ENCODE measurements at regions of chr21 and their contacts with region 1.

Region 1: GRCh38 chr21:18499761-18500376 is 96.3 kb upstream of the TMPRSS15 start:
- DNase-seq: peak; percentile 21
- ATAC-seq: no peak
- H3K4me3 ChIP-seq: no peak overlapping the region
- H3K27ac ChIP-seq: no peak overlapping the region
- H3K4me1 ChIP-seq: no peaks in the 10 kb centered on the region
- H3K27me3 ChIP-seq: no peaks in the 10 kb centered on the region
- CTCF ChIP-seq: peak; percentile 50
- EP300 ChIP-seq: no peak
- POLR2A ChIP-seq: no peak
- RAD21 ChIP-seq: no peak

Region 2: GRCh38 chr21:18417141-18417790 is 82.6 kb before region 1 on chr21:
- CTCF ChIA-PET with region 1: no interaction called
- POLR2A ChIA-PET with region 1: no interaction called
- in situ Hi-C with region 1: no loop called
- intact Hi-C with region 1: no loop called
- DNase-seq: no peak
- ATAC-seq: no peak
- H3K4me3 ChIP-seq: no peak overlapping the region
- H3K27ac ChIP-seq: no peak overlapping the region
- H3K4me1 ChIP-seq: no peaks in the 10 kb centered on the region
- H3K27me3 ChIP-seq: no peaks in the 10 kb centered on the region
- CTCF ChIP-seq: no peak
- EP300 ChIP-seq: no peak
- POLR2A ChIP-seq: no peak
- RAD21 ChIP-seq: no peak

Region 3: GRCh38 chr21:18430341-18430740 is 69.5 kb before region 1 on chr21:
- CTCF ChIA-PET with region 1: no interaction called
- POLR2A ChIA-PET with region 1: no interaction called
- in situ Hi-C with region 1: no loop called
- intact Hi-C with region 1: loop called (anchors 2 kb)
- DNase-seq: no peak
- ATAC-seq: no peak
- H3K4me3 ChIP-seq: no peak overlapping the region
- H3K27ac ChIP-seq: no peak overlapping the region
- H3K4me1 ChIP-seq: no peaks in the 10 kb centered on the region
- H3K27me3 ChIP-seq: no peaks in the 10 kb centered on the region
- CTCF ChIP-seq: no peak
- EP300 ChIP-seq: no peak
- POLR2A ChIP-seq: no peak
- RAD21 ChIP-seq: no peak

Region 4: DNA sequence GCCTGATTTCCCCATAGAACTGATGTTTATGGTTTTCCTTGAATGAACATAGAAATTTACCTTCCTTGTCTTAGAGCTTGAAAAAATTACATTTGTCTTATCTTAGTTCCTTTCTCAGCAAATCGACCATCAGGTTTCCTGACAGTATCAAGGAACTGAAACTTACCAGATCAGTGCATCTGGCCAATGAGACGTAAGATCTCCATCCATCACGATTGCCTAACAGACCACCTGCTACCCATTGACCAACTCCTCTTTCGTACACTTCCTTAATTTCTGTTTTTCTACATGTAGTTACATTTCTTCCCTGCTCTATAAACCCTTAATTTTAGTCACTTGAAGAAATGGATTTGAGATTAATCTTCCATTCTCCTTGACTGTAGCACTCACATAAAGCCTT is 38.9 kb before region 1 on chr21:
- CTCF ChIA-PET with region 1: no interaction called
- POLR2A ChIA-PET with region 1: no interaction called
- in situ Hi-C with region 1: no loop called
- intact Hi-C with region 1: no loop called
- DNase-seq: no peak
- ATAC-seq: no peak
- H3K4me3 ChIP-seq: no peak overlapping the region
- H3K27ac ChIP-seq: no peak overlapping the region
- H3K4me1 ChIP-seq: no peaks in the 10 kb centered on the region
- H3K27me3 ChIP-seq: no peaks in the 10 kb centered on the region
- CTCF ChIP-seq: no peak
- EP300 ChIP-seq: no peak
- POLR2A ChIP-seq: no peak
- RAD21 ChIP-seq: no peak

Region 5: DNA sequence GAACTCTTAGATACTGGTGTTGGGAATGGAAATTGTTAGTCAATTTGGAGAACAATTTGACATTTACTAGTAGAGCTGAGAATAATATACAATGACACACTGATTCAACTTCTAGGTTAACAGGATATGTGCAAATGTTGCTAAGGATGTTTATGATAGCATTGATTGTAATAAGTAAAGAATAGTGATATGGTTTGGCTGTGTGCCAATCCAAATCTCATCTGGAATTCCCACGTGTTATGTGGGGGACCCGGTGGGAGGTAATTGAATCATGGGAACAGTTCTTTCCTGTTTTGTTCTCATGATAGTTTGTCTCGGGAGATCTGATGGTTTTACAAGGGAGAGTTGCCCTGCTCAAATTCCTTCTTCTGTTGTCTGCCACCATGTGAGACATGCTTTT is 206.1 kb after region 1 on chr21:
- CTCF ChIA-PET with region 1: no interaction called
- POLR2A ChIA-PET with region 1: no interaction called
- in situ Hi-C with region 1: no loop called
- intact Hi-C with region 1: no loop called
- DNase-seq: no peak
- ATAC-seq: no peak
- H3K4me3 ChIP-seq: no peak overlapping the region
- H3K27ac ChIP-seq: no peak overlapping the region
- H3K4me1 ChIP-seq: no peaks in the 10 kb centered on the region
- H3K27me3 ChIP-seq: no peaks in the 10 kb centered on the region
- CTCF ChIP-seq: no peak
- EP300 ChIP-seq: no peak
- POLR2A ChIP-seq: no peak
- RAD21 ChIP-seq: no peak

Measured in HepG2 (cell line).